Activated CD4-positive, alpha-beta T cell treated with anti-CD3 and anti-CD28 coated beads for 36 hours (primary cell): ENCODE measurements at regions of chr5 and their contacts with region 1.

Region 1: DNA sequence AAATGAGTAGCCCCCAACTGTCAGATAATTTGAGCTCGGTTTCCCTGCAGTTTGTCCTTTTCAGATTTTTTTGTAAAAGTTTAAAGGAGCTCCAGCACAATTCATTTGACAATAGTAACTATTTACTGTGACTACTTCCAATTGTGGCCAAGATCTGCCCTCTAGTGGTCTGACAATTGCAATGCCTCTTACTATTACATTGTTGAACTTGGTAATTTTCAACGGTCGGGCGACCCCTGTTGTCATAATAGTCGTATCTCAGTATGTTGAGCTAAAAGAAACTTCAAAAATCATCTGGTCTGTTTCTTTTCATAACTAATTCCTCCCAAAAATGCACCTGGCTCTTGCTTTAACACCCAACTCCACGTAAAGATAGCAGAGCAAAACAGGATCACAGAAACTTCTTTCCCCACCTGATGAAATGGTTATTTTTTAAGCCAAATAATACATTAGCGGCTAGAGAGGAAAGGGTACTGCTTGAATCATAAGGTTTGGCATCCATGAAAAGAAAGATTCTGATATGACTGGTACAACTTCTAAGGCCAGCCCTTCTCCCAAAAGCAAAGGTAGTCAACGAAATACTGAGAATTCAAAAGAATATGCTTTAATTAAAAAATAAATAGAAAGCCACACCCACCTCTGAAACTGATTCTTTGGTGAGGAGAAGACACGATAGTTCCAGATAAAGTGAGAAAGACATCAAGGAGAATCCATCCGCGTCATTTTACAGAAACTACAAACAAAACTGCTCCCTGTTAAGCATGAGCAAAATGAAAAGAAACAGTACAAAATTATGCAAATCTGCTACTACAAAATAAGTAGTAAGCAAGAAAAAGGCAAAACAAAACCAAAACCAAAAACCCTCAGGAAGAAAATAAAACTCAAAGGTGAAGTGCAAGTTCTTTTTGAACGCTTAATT is 76.9 kb upstream of the HTR4 start:
- DNase-seq: peak; percentile 85
- ATAC-seq: peak; percentile 94
- H3K4me3 Mint-ChIP-seq: no peak overlapping the region
- H3K27ac Mint-ChIP-seq: no peak overlapping the region
- H3K4me1 Mint-ChIP-seq: peaks cover 7% of the 10 kb centered on the region
- H3K27me3 Mint-ChIP-seq: peaks cover 1% of the 10 kb centered on the region

Region 2: DNA sequence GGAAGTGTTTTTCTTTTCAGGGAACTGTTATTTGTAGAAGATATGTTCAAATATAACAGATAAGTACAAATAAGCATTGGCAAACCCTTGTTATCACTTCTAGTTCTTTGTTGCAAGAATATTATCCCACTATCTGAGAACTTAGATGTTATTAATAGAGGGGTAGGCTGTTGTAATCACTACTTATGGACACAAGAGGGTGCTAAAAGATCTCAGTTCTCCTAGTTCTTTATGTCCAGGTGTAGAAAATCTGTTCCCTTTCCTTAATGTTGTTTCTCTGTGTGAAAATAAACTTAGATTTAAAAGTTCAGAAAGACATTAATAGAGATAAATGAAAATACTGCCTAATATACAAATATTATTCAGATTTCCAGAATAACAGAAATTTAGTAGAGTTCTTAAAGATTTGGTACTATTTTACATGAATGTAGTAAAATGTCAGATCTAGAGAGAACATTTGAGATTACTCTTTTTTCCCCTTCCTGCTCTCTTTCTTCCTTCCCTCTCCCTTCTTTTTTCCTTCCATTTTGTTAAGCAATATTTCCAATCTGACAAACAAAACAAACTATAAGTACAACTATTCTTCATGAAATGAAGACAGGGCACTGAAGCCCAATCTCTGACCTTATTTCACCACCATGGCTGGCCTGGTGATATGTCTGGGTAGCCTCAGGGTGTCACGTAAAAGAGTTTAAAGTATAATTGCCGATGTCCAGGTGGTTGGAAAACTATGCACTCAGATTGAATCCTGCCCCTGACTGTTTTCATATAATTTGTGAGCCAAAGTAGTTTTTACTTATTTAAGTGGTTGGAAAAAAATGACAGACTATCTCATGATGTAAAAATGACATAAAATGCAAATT is 781.3 kb before region 1 on chr5:
- CTCF ChIA-PET with region 1: interaction called, 5 read pairs
- POLR2A ChIA-PET with region 1: no interaction called
- intact Hi-C with region 1: loop called (anchors 1 to 5 kb)
- DNase-seq: no peak
- ATAC-seq: no peak
- H3K4me3 Mint-ChIP-seq: no peak overlapping the region
- H3K27ac Mint-ChIP-seq: no peak overlapping the region
- H3K4me1 Mint-ChIP-seq: no peaks in the 10 kb centered on the region
- H3K27me3 Mint-ChIP-seq: peaks cover 6% of the 10 kb centered on the region

Region 3: DNA sequence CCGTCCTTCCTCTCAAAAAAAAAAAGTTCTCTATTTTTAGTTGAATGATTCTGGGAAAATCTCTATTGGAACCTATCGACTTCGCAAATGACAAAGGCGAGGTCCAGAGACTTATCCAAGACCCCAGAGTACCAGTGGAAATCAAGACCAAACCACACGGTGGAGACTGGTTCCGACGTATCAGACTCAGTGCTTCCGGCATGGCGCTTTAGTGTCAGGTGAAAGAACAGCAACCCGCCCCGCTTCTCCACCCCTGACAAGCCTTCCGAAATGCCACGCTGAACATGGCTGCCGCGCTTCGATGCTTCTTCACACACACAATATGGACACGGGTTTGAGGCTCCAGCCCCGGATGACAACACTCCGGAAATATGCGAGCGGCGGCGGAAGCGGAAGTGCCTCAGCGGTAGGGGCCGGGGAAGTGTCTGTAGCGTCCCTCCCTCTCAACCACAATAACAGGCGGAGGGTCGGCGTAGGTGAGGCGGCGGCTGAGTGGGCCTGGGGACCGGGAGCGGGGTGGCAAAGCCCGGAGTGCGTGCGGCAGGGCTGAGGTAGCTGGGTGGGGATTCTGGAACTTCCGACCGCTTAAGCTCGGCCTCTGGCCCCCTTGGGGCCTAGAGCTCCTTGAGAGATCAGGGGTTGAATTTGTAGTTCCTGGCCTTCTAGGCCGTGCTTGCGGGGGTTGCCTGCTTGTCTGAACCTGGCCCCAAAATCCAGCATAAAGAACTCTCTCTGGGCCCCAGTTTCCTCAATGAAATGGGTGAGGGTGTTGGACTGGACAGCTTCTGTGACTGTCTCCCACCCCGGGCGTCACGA is 347.4 kb before region 1 on chr5 and contains the start of gene FBXO38:
- CTCF ChIA-PET with region 1: interaction called, 6 read pairs
- POLR2A ChIA-PET with region 1: no interaction called
- intact Hi-C with region 1: loop called in 1 of 2 experiments (anchors 5 kb)
- DNase-seq: peak; percentile 98
- ATAC-seq: peak; percentile 97
- H3K4me3 Mint-ChIP-seq: peak within 1 kb of the TSS; percentile 94
- H3K27ac Mint-ChIP-seq: peak within 1 kb of the TSS; percentile 99
- H3K4me1 Mint-ChIP-seq: peaks cover 56% of the 10 kb centered on the region
- H3K27me3 Mint-ChIP-seq: no peaks in the 10 kb centered on the region
- total RNA-seq, gene FBXO38: 47.5 to 65.4 TPM

Region 4: DNA sequence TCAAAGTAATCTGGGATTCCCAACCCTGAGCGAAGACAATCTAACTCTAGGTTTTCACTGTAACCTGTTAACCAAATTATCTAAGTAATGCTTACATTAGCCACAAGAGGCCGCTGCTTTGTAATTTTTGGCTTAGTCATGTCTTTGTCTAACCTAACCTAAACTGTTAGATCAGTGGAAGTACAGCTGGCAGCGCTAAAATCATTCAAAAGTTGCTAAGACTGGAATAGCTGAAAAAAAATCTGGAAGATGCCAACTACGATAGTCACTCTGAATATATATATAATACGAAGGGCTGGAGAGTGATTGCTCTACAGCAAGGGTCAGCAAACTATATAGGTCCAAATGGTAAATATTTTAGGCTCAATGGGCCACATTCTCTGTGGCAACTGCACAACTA is 287.2 kb before region 1 on chr5:
- CTCF ChIA-PET with region 1: interaction called, 198 read pairs
- POLR2A ChIA-PET with region 1: no interaction called
- intact Hi-C with region 1: loop called (anchors 1 kb)
- DNase-seq: peak; percentile 63
- ATAC-seq: peak; percentile 83
- H3K4me3 Mint-ChIP-seq: no peak overlapping the region
- H3K27ac Mint-ChIP-seq: no peak overlapping the region
- H3K4me1 Mint-ChIP-seq: no peaks in the 10 kb centered on the region
- H3K27me3 Mint-ChIP-seq: no peaks in the 10 kb centered on the region

Region 5: GRCh38 chr5:148708854-148709253 is 22.3 kb before region 1 on chr5:
- CTCF ChIA-PET with region 1: interaction called, 25 read pairs
- POLR2A ChIA-PET with region 1: no interaction called
- intact Hi-C with region 1: no loop called
- DNase-seq: peak; percentile 57
- ATAC-seq: peak; percentile 98
- H3K4me3 Mint-ChIP-seq: no peak overlapping the region
- H3K27ac Mint-ChIP-seq: no peak overlapping the region
- H3K4me1 Mint-ChIP-seq: peaks cover 22% of the 10 kb centered on the region
- H3K27me3 Mint-ChIP-seq: peaks cover 26% of the 10 kb centered on the region

Region 6: DNA sequence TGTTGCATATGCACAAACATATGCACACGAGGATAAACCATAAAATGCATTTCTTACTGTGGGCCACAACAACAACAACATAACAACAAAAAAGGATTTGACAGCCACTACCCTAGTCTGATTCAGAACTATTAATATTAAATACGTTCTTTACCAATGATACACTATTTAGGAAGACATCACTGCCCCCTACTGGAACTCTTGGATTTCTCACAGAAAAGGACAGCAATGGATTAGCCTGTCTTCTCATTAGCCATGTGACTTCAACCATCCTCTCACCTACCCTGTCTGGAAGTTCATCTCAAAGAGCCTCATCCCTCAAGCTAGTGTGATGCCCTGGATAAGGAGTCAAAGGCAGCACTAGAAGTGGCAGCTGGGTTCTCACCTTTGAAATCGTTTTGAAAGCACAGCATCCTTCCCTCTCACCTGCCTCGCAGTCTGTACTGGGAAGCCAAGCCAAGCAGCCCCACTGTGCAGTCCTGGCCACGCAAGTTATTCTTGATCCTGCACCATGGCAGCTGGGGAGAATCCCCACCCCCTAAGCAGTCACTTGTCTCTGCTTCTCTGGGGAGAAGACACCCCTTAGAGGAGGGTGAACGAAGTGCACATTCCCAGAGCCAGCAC is 267.1 kb after region 1 on chr5:
- CTCF ChIA-PET with region 1: interaction called, 19 read pairs
- POLR2A ChIA-PET with region 1: no interaction called
- intact Hi-C with region 1: loop called (anchors 1 to 2 kb)
- DNase-seq: peak; percentile 15
- ATAC-seq: peak; percentile 66
- H3K4me3 Mint-ChIP-seq: no peak overlapping the region
- H3K27ac Mint-ChIP-seq: no peak overlapping the region
- H3K4me1 Mint-ChIP-seq: no peaks in the 10 kb centered on the region
- H3K27me3 Mint-ChIP-seq: peaks cover 27% of the 10 kb centered on the region

Region 7: GRCh38 chr5:149268928-149269557 is 537.8 kb after region 1 on chr5:
- CTCF ChIA-PET with region 1: interaction called, 3 read pairs
- POLR2A ChIA-PET with region 1: no interaction called
- intact Hi-C with region 1: loop called (anchors 2 to 10 kb)
- DNase-seq: no peak
- ATAC-seq: peak; percentile 45
- H3K4me3 Mint-ChIP-seq: no peak overlapping the region
- H3K27ac Mint-ChIP-seq: no peak overlapping the region
- H3K4me1 Mint-ChIP-seq: peaks cover 13% of the 10 kb centered on the region
- H3K27me3 Mint-ChIP-seq: peaks cover 23% of the 10 kb centered on the region